ENCODE measurements at regions of chr22 and their contacts with region 1.

Region 1: GRCh38 chr22:50012716-50013181 is at the start of gene IL17REL:
- DNase-seq: no peak
- ATAC-seq: no peak
- H3K4me3 Mint-ChIP-seq: peak within 1 kb of the TSS; percentile 71
- H3K27ac Mint-ChIP-seq: peak within 1 kb of the TSS; percentile 68
- H3K4me1 Mint-ChIP-seq: peaks cover 49% of the 10 kb centered on the region
- H3K27me3 Mint-ChIP-seq: no peaks in the 10 kb centered on the region
- CTCF ChIP-seq: no peak
- total RNA-seq, gene IL17REL: 0.15 and 0.31 TPM in 2 replicates

Region 2: DNA sequence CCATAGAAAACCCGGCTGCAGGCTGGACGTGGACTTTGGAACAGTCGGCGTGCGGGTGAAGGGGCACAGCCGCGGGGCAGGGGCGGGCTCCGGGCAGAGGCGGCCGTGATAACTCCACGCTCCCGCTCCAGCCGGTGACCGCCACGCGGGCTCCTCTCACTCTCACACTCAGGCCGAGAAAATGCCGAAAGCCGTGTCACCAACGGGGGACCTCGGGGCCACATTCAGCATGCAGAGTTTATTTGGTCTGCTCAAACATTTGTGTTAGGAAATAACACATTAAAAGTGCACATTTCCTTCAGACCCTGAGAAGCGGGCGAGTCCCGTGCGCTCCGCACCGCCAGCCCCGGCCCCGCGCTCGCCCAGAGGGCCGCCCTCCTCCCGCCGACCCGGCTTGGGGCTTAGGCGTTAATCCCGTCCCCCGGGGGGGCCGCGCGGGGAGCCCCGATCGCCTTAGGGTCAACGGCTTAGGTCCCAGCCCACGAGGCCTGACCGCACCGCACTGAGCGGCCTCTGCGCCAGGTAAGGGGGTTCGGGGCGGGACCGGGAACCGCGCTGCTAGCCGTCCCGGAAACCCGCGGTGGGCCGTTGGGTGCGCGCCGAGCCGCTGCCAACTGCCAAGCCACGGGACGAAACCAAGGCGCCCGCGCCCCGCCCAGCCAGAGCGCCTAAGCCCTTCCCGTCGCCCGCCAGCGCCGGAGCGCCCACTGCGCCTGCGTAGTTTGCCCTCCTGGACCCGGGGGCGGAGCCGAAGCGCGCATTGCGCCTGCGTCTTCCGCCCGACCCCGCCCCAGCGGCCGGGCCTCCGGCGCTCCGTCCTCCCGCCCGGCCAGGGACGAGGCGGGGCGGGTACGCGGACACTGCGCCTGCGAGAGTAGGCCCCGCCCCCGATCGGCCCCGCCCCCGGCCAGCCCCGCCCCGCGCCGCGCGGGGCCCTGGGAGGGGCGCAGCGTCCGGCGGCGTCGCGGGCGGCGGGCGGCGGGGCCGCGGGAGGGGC is 159.6 kb before region 1 on chr22 and contains the start of gene ZBED4:
- CTCF ChIA-PET with region 1: no interaction called
- POLR2A ChIA-PET with region 1: no interaction called
- intact Hi-C with region 1: loop called (anchors 10 kb)
- DNase-seq: peak; percentile 100
- ATAC-seq: peak; percentile 88
- H3K4me3 Mint-ChIP-seq: peak within 1 kb of the TSS; percentile 93
- H3K27ac Mint-ChIP-seq: peak within 1 kb of the TSS; percentile 89
- H3K4me1 Mint-ChIP-seq: peaks cover 36% of the 10 kb centered on the region
- H3K27me3 Mint-ChIP-seq: peaks cover 16% of the 10 kb centered on the region
- CTCF ChIP-seq: no peak
- total RNA-seq, gene ZBED4: 16.0 and 17.3 TPM in 2 replicates

Region 3: GRCh38 chr22:49936018-49936952 is 76.5 kb before region 1 on chr22:
- CTCF ChIA-PET with region 1: interaction called, 5 read pairs
- POLR2A ChIA-PET with region 1: interaction called, 18 read pairs
- intact Hi-C with region 1: loop called (anchors 5 kb)
- DNase-seq: peak; percentile 92
- ATAC-seq: peak; percentile 75
- H3K4me3 Mint-ChIP-seq: peak overlapping the region; percentile 61
- H3K27ac Mint-ChIP-seq: peak overlapping the region; percentile 82
- H3K4me1 Mint-ChIP-seq: peaks cover 42% of the 10 kb centered on the region
- H3K27me3 Mint-ChIP-seq: no peaks in the 10 kb centered on the region
- CTCF ChIP-seq: no peak

Region 4: DNA sequence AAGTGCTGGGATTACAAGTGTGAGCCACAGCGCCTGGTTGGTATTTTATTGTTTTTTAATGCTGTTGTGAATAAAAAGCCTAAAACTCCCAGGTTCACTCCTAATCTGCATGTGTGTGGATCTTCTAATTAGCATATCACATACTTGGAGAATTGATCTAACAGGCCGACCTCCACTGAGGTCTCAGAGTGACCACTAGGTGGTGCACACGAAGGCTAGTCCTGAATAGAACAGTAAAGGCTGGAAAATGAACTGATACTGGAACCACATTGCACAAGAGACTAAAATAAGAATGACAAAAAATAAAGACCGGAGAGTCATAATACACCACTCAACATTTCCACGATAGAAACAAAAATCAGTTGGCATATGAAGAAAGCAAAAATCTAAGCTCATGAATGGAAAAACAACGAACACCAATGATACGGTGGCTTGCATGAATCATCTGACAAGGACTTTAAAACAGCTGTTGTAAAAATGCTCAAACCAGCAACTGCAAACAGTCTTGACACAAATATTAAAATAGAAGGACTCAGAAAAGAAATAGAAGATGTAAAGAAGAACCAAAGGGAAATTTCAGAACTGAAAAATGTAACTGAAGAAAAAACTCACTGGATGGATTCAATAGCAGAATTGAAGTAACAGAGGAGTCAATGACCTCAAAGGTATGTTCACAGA is 33.0 kb before region 1 on chr22:
- CTCF ChIA-PET with region 1: no interaction called
- POLR2A ChIA-PET with region 1: interaction called, 3 read pairs
- intact Hi-C with region 1: loop called (anchors 5 kb)
- DNase-seq: no peak
- ATAC-seq: no peak
- H3K4me3 Mint-ChIP-seq: no peak overlapping the region
- H3K27ac Mint-ChIP-seq: peak overlapping the region; percentile 14
- H3K4me1 Mint-ChIP-seq: peaks cover 33% of the 10 kb centered on the region
- H3K27me3 Mint-ChIP-seq: peaks cover 2% of the 10 kb centered on the region
- CTCF ChIP-seq: no peak

Region 5: GRCh38 chr22:50030297-50031188 is 17.8 kb after region 1 on chr22:
- CTCF ChIA-PET with region 1: interaction called, 4 read pairs
- POLR2A ChIA-PET with region 1: interaction called, 5 read pairs
- intact Hi-C with region 1: loop called (anchors 2 kb)
- DNase-seq: peak; percentile 77
- ATAC-seq: peak; percentile 97
- H3K4me3 Mint-ChIP-seq: no peak overlapping the region
- H3K27ac Mint-ChIP-seq: no peak overlapping the region
- H3K4me1 Mint-ChIP-seq: peaks cover 7% of the 10 kb centered on the region
- H3K27me3 Mint-ChIP-seq: peaks cover 8% of the 10 kb centered on the region
- CTCF ChIP-seq: peak; percentile 75